ENCODE measurements at regions of chr6 and their contacts with region 1.

Region 1: DNA sequence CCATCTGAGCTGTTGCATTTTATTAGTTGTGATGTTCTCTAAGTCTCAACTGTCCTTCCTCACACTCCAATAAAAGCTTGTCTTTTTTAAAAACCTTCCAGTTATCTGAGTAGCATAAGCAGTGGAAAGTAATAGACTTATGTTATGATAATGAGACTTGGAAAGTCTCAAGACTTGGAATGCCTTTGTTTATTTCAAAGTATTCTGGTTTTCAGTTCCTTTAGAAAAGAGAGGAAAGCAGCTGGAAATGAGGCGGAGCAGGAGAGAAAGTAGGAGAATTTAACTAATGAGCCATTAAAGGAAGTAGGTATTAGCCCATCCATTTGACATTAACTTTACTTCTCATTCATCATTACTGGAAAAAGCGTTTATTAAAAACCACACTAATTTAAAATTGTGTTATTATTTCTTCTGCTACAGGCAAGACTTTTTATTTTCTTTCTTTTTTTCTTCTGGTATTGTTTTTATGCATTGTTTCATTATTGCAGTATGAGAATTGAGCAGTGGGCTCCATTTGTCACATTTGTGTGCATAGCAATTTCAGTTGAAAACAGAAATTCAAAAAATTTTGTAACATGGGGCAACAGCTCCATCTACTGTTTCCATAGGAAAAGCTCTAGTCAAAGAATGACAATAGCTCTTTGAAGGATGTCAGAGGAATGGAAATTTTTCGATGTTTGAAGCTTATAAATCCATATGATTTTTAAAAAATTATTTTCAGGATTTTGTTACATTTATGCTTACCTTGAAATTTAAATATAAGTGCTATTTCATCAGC is 194.8 kb downstream of the COL9A1 start:
- DNase-seq: no peak
- ATAC-seq: no peak

Region 2: DNA sequence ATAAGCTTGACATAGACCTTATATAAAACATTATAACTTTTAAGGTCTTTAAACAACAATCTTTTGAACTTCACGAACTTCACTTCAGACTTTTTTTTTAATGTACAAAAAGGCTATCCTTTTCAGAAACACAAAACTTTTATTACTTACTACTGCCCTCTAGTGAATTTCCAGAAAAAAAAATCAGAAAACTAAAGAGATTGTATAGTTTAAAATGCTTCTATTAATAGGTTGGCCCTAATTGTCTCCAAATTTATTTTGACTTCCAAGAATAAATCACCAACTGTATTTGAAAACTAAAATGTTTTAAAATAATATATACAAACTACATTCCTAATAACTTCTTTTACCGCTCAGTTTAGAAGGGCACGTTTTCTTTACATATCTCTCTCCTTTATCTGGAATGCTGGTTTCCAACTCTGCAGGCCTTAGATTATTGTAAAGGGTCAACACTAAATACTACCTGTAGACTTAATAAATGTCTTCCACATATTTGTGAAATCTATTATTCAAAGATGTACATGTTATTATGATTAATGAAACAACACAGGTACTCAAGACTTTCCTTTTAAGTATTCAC is 378.1 kb before region 1 on chr6:
- intact Hi-C with region 1: loop called (anchors 5 kb)
- DNase-seq: no peak
- ATAC-seq: no peak

Region 3: GRCh38 chr6:69835414-69836179 is 272.4 kb before region 1 on chr6:
- intact Hi-C with region 1: loop called (anchors 5 kb)
- DNase-seq: no peak
- ATAC-seq: no peak

Region 4: DNA sequence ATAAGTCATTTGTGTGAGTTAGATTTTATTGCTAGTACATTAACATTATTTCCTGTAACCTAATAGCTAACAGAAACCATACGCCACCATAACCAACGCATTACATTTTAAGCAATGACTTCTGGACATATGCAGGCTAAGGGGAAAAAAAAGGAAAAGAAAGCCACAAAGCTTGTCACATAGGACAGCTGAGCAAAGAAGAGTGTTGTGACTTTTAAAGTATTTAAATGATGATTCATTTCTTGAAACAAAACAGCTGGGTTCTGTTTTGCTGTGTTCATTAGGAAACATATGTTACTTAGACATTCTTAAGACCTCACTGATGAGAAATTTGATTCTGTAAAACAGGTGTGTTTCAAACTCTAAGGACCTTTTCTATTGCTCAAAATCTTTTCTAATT is 23.5 kb after region 1 on chr6:
- intact Hi-C with region 1: no loop called
- DNase-seq: no peak
- ATAC-seq: no peak

Measured in left ventricle myocardium superior (tissue), 1 donor.